ENCODE measurements at regions of chr6 and their contacts with region 1.

Region 1: GRCh38 chr6:17226786-17227233 is 54.4 kb upstream of the RBM24 start:
- DNase-seq: no peak
- H3K4me3 ChIP-seq: no peak overlapping the region
- H3K27ac ChIP-seq: no peak overlapping the region
- H3K4me1 ChIP-seq: no peaks in the 10 kb centered on the region
- H3K27me3 ChIP-seq: no peaks in the 10 kb centered on the region
- CTCF ChIP-seq: no peak

Region 2: GRCh38 chr6:17145162-17145561 is 81.6 kb before region 1 on chr6:
- CTCF ChIA-PET with region 1: no interaction called
- dilution Hi-C with region 1: no loop called
- in situ Hi-C with region 1: no loop called
- intact Hi-C with region 1: no loop called
- DNase-seq: no peak
- H3K4me3 ChIP-seq: no peak overlapping the region
- H3K27ac ChIP-seq: no peak overlapping the region
- H3K4me1 ChIP-seq: no peaks in the 10 kb centered on the region
- H3K27me3 ChIP-seq: no peaks in the 10 kb centered on the region
- CTCF ChIP-seq: no peak

Region 3: GRCh38 chr6:17193106-17193775 is 33.6 kb before region 1 on chr6:
- CTCF ChIA-PET with region 1: no interaction called
- dilution Hi-C with region 1: loop called (anchors 5 kb)
- in situ Hi-C with region 1: no loop called
- intact Hi-C with region 1: no loop called
- DNase-seq: no peak
- H3K4me3 ChIP-seq: no peak overlapping the region
- H3K27ac ChIP-seq: no peak overlapping the region
- H3K4me1 ChIP-seq: no peaks in the 10 kb centered on the region
- H3K27me3 ChIP-seq: no peaks in the 10 kb centered on the region
- CTCF ChIP-seq: no peak

Measured in mammary epithelial cell (primary cell).